ENCODE measurements at regions of chr19 and their contacts with region 1.

Region 1: DNA sequence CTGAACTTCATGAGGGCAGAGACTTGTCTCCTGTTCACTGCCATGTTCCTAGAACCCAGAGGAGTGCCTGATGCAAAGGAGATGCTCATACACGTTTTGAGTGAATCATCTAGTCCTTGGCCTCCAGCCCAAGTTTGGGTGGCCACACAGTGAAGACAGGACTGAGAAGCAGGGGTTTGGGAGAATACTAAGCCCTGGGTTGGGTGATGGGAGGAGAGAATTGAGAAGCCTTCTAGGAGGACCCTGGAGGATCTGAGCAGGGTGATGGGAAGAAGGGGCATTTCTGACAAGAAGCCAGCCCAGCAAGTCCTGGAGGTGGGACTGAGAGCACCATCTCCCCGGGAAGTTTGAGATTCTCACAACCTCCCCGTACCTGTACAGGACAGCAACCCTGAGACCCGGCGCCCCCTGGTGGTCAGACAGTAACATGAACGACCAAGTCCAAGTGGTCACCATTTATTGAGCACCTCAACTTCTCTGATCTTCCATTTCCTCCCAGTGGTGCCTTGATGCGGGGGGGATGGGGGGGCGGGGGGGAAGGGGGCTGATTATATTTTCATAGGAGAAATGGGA is 11.0 kb downstream of the CTU1 start:
- DNase-seq: peak; percentile 73 to 75
- ATAC-seq: peak; percentile 73 to 87
- H3K4me3 ChIP-seq: no peak overlapping the region
- H3K27ac ChIP-seq: no peak overlapping the region
- H3K4me1 ChIP-seq: peaks cover 10% of the 10 kb centered on the region; the same call in 1 of the 3 replicates
- CTCF ChIP-seq: peak; percentile 67
- EP300 ChIP-seq: no peak
- POLR2A ChIP-seq: no peak
- RAD21 ChIP-seq: peak; percentile 8 to 38; a peak in 2 of 5 replicates

Region 2: GRCh38 chr19:51079481-51080110 is 17.7 kb before region 1 on chr19:
- CTCF ChIA-PET with region 1: interaction called, 30 read pairs
- POLR2A ChIA-PET with region 1: no interaction called
- DNase-seq: no peak
- ATAC-seq: no peak
- H3K4me3 ChIP-seq: no peak overlapping the region
- H3K27ac ChIP-seq: no peak overlapping the region
- H3K4me1 ChIP-seq: no peaks in the 10 kb centered on the region
- CTCF ChIP-seq: no peak
- EP300 ChIP-seq: no peak
- POLR2A ChIP-seq: no peak
- RAD21 ChIP-seq: no peak

Region 3: GRCh38 chr19:51086153-51086850 is 10.9 kb before region 1 on chr19:
- CTCF ChIA-PET with region 1: interaction called, 30 read pairs
- POLR2A ChIA-PET with region 1: no interaction called
- DNase-seq: no peak
- ATAC-seq: no peak
- H3K4me3 ChIP-seq: no peak overlapping the region
- H3K27ac ChIP-seq: no peak overlapping the region
- H3K4me1 ChIP-seq: no peaks in the 10 kb centered on the region
- CTCF ChIP-seq: no peak
- EP300 ChIP-seq: no peak
- POLR2A ChIP-seq: no peak
- RAD21 ChIP-seq: no peak

Region 4: GRCh38 chr19:51246164-51246552 is 148.9 kb after region 1 on chr19:
- CTCF ChIA-PET with region 1: no interaction called
- POLR2A ChIA-PET with region 1: no interaction called
- DNase-seq: no peak
- ATAC-seq: no peak
- H3K4me3 ChIP-seq: no peak overlapping the region
- H3K27ac ChIP-seq: no peak overlapping the region
- H3K4me1 ChIP-seq: no peaks in the 10 kb centered on the region
- CTCF ChIP-seq: no peak
- EP300 ChIP-seq: no peak
- POLR2A ChIP-seq: no peak
- RAD21 ChIP-seq: no peak

Measured in A549 (cell line).